Natural killer cell (primary cell): ENCODE measurements at regions of chr7 and their contacts with region 1.

Region 1: GRCh38 chr7:92528188-92528957 is at the starts of genes PEX1 and RBM48:
- DNase-seq: peak; percentile 89 to 98
- ATAC-seq: peak; percentile 91 to 97 (median 92)
- H3K4me3 ChIP-seq: peak within 1 kb of the TSS; percentile 67
- H3K4me3 Mint-ChIP-seq: peak within 1 kb of the TSS; percentile 97
- H3K27ac ChIP-seq: peak within 1 kb of the TSS; percentile 79
- H3K27ac Mint-ChIP-seq: peak within 1 kb of the TSS; percentile 90 to 97
- H3K4me1 ChIP-seq: peaks cover 3% of the 10 kb centered on the region
- H3K4me1 Mint-ChIP-seq: peaks cover 22 to 31% of the 10 kb centered on the region in 2 donors
- H3K27me3 ChIP-seq: no peaks in the 10 kb centered on the region
- H3K27me3 Mint-ChIP-seq: no peaks in the 10 kb centered on the region
- CTCF ChIP-seq: peak; percentile 28
- total RNA-seq, gene PEX1: 22.8 to 26.7 (median 26.2) TPM
- total RNA-seq, gene RBM48: 32.2 to 42.4 (median 35.7) TPM

Region 2: DNA sequence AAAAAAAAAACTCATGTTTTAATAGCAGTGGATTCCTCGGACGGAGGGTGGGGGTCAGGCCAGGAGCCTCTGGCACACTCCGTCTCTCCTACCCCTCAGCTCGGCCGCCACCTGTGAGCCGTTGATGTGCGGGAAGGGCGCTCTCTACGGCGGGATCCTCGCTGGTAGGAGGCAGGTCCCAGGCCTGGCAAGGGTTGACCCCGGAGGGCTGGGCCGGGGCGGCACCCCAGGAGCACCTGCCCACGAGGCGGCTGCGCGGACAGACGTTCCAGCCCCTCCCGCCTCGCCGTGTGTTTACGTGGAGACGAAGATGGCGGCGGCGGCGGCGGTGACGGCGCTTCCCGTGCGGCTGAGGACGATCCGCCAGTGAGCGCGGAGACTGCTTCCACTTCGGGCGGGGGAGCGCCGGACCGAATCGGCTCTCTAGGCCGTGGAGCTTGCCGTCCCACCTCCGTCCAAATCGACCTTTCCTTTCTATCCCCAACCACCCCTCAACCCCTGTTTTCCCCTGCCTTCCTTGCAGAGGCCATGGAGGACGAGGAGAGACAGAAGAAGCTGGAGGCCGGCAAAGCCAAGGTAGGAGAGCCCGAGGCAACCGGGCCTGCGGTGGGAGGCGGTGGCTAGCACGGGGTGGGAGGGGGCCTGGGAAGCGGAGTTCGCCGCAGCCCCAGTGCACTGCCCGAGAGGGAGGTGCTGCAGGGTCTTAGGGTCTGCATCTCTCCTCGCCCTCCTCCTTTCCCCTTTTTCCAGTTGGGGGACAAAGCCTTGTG is 587.6 kb before region 1 on chr7 and contains the start of gene AKAP9:
- intact Hi-C with region 1: loop called (anchors 1 kb)
- DNase-seq: peak; percentile 82 to 91
- ATAC-seq: peak; percentile 88 to 92 (median 92)
- H3K4me3 ChIP-seq: peak within 1 kb of the TSS; percentile 95
- H3K4me3 Mint-ChIP-seq: peak within 1 kb of the TSS; percentile 96
- H3K27ac ChIP-seq: peak within 1 kb of the TSS; percentile 98
- H3K27ac Mint-ChIP-seq: peak within 1 kb of the TSS; percentile 91 to 96
- H3K4me1 ChIP-seq: peaks cover 10% of the 10 kb centered on the region
- H3K4me1 Mint-ChIP-seq: peaks cover 29 to 35% of the 10 kb centered on the region in 2 donors
- H3K27me3 ChIP-seq: no peaks in the 10 kb centered on the region
- H3K27me3 Mint-ChIP-seq: peaks cover 8 to 9% of the 10 kb centered on the region in 2 donors
- CTCF ChIP-seq: no peak
- total RNA-seq, gene AKAP9: 78.8 to 93.0 (median 81.9) TPM

Region 3: GRCh38 chr7:92134271-92135051 is 393.9 kb before region 1 on chr7 and contains the start of gene CYP51A1:
- intact Hi-C with region 1: loop called (anchors 2 kb)
- DNase-seq: peak; percentile 95 to 98
- ATAC-seq: peak; percentile 83 to 95 (median 84)
- H3K4me3 ChIP-seq: peak within 1 kb of the TSS; percentile 75
- H3K4me3 Mint-ChIP-seq: peak within 1 kb of the TSS; percentile 98
- H3K27ac ChIP-seq: peak within 1 kb of the TSS; percentile 91
- H3K27ac Mint-ChIP-seq: peak within 1 kb of the TSS; percentile 99
- H3K4me1 ChIP-seq: peaks cover 14% of the 10 kb centered on the region
- H3K4me1 Mint-ChIP-seq: peaks cover 36% of the 10 kb centered on the region in 2 donors
- H3K27me3 ChIP-seq: no peaks in the 10 kb centered on the region
- H3K27me3 Mint-ChIP-seq: no peaks in the 10 kb centered on the region
- CTCF ChIP-seq: no peak
- total RNA-seq, gene CYP51A1: 37.2 to 53.0 (median 49.3) TPM

Region 4: DNA sequence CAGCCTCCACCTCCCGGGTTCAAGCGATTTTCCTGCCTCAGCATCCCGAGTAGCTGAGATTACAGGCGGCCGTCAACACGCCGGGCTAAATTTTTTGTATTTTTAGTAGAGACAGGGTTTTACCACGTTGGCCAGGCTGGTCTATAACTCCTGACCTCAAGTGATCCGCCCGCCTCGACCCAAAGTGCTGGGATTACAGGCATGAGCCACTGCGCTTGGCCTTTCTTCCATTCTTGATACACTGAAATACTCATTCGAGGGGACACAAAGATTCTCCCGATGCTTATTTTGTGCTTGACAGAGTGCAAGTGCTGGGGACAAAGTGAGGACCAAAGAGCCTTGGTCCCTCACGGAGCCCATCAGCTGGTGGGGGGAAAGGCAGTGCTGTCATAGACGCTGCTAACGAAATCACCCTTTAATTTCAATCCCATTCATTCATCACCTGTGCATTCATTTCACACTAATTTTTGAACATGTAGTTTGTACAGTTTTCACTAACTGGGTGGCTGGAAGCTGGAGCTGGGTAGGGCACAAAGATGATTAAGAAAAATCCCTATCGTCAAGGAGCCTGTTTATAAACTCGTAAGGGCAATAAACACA is 62.4 kb after region 1 on chr7:
- intact Hi-C with region 1: loop called (anchors 1 kb)
- DNase-seq: no peak
- ATAC-seq: no peak
- H3K4me3 ChIP-seq: peak overlapping the region; percentile 93
- H3K4me3 Mint-ChIP-seq: peak overlapping the region; percentile 97
- H3K27ac ChIP-seq: no peak overlapping the region
- H3K27ac Mint-ChIP-seq: peak overlapping the region; percentile 95
- H3K4me1 ChIP-seq: peaks cover 27% of the 10 kb centered on the region
- H3K4me1 Mint-ChIP-seq: peaks cover 34 to 36% of the 10 kb centered on the region in 2 donors
- H3K27me3 ChIP-seq: no peaks in the 10 kb centered on the region
- H3K27me3 Mint-ChIP-seq: peaks cover 0 to 10% of the 10 kb centered on the region in 2 donors
- CTCF ChIP-seq: no peak

Region 5: DNA sequence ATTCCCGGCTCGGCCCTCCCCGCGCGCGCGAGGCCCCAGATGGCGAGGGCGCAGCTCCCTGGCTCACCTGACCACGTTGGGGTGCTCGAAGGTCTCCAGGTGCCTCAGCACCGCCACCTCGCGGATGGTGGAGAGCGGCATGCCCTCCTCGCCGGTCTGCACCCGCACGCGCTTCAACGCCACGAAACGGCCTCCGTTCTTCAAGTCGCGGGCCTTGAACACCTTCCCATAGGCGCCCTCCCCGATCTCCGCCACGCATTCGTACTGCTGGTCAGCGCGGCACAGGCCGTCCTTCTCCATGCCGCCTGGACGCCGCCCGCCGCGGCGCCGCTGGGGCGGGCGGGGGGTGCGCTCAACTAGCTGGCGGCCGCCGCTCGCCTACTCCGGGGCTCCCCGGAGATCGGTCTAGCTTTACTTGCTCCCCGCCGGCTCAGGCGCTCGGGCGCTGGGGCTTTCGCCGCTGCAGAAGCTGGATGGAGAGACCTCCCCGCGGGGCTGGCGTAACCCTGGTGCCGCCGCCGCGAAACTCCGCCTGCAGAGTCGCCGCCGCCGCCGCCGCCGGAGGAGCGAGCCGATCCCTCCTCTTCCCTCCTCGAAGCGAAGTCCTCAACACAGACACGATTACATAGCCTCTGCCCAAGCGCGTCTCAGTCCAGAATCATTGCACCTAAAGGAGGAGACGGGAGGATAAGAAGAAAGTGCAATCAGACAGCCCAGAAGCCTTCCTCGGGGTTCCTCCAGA is 304.8 kb after region 1 on chr7:
- intact Hi-C with region 1: loop called (anchors 5 kb)
- DNase-seq: peak; percentile 83 to 94
- ATAC-seq: peak; percentile 69 to 86 (median 80)
- H3K4me3 ChIP-seq: peak overlapping the region; percentile 55
- H3K4me3 Mint-ChIP-seq: peak overlapping the region; percentile 100
- H3K27ac ChIP-seq: peak overlapping the region; percentile 70
- H3K27ac Mint-ChIP-seq: peak overlapping the region; percentile 88 to 94
- H3K4me1 ChIP-seq: peaks cover 18% of the 10 kb centered on the region
- H3K4me1 Mint-ChIP-seq: peaks cover 59 to 67% of the 10 kb centered on the region in 2 donors
- H3K27me3 ChIP-seq: no peaks in the 10 kb centered on the region
- H3K27me3 Mint-ChIP-seq: no peaks in the 10 kb centered on the region
- CTCF ChIP-seq: peak; percentile 88

Region 6: DNA sequence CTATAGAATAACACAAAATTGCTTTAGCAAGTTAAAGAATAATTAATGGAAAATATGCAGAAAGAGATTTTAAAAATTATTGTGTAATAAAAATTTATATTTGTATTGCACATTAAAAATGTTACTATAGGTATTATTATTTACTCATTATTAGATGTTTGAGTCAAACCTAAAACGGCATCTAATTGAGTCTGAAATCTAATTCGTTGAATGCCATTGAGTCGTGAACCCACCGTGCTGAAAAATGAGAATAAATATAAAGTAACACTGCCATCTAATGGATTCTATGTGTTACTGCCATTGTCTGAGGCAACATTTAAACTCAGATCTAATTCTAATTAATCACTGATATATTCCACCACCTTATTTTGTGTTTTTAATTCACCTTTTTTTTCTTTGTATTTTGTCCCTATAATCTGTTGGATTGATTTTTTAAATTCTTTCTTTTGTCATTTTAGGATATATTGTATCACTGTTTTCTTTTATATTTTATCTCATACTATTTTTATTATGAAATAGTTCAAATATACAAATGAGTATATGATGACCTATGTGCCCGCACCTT is 527.3 kb after region 1 on chr7:
- intact Hi-C with region 1: loop called (anchors 10 kb)
- DNase-seq: peak in 1 of 2 donors; percentile 65
- ATAC-seq: peak; percentile 75 to 79 (median 76)
- H3K4me3 ChIP-seq: no peak overlapping the region
- H3K4me3 Mint-ChIP-seq: no peak overlapping the region
- H3K27ac ChIP-seq: no peak overlapping the region
- H3K27ac Mint-ChIP-seq: no peak overlapping the region
- H3K4me1 ChIP-seq: no peaks in the 10 kb centered on the region
- H3K4me1 Mint-ChIP-seq: no peaks in the 10 kb centered on the region
- H3K27me3 ChIP-seq: no peaks in the 10 kb centered on the region
- H3K27me3 Mint-ChIP-seq: peaks cover 2 to 7% of the 10 kb centered on the region in 2 donors
- CTCF ChIP-seq: peak; percentile 93

Region 7: GRCh38 chr7:93117852-93118530 is 589.6 kb after region 1 on chr7 and contains the start of gene SAMD9:
- intact Hi-C with region 1: loop called (anchors 1 kb)
- DNase-seq: peak; percentile 31 to 88
- ATAC-seq: peak; percentile 99 to 100 (median 99)
- H3K4me3 ChIP-seq: peak within 1 kb of the TSS; percentile 56
- H3K4me3 Mint-ChIP-seq: peak within 1 kb of the TSS; percentile 98
- H3K27ac ChIP-seq: peak within 1 kb of the TSS; percentile 86
- H3K27ac Mint-ChIP-seq: peak within 1 kb of the TSS; percentile 90 to 92
- H3K4me1 ChIP-seq: peaks cover 12% of the 10 kb centered on the region
- H3K4me1 Mint-ChIP-seq: peaks cover 50% of the 10 kb centered on the region in 2 donors
- H3K27me3 ChIP-seq: no peaks in the 10 kb centered on the region
- H3K27me3 Mint-ChIP-seq: no peaks in the 10 kb centered on the region
- CTCF ChIP-seq: no peak
- total RNA-seq, gene SAMD9: 52.3 to 70.0 (median 56.9) TPM